ENCODE measurements at regions of chr17 and their contacts with region 1.

Region 1: GRCh38 chr17:7825206-7825990 is 8.6 kb upstream of the KDM6B start:
- DNase-seq: peak; percentile 69
- H3K4me3 ChIP-seq: no peak overlapping the region
- H3K27ac ChIP-seq: no peak overlapping the region
- H3K4me1 ChIP-seq: peaks cover 0 to 12% of the 10 kb centered on the region in 2 experiments; a peak in 1 of 4 replicates
- H3K27me3 ChIP-seq: peaks cover 2% of the 10 kb centered on the region
- CTCF ChIP-seq: peak; percentile 40
- EP300 ChIP-seq: no peak
- RAD21 ChIP-seq: peak; percentile 28; the same call in 1 of the 2 replicates

Region 2: DNA sequence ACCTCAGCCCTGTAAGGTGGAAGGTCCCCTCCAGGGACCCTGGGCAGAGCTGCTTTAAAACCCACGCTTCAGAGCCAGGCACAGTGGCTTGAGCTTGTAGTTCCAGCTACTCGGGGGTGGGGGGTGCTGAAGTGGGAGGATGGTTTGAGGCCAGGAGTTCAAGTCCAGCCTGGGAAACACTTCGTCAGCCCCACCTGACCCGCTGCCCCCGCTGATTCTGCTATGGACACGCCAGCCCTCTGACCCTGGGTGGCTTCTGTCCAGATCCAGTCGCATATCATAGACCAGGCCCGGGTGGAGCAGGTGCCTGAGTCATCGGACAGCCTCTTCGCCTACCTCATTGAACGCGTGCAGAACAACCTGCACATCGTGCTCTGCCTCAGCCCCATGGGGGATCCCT is 26.6 kb before region 1 on chr17:
- CTCF ChIA-PET with region 1: no interaction called
- POLR2A ChIA-PET with region 1: no interaction called
- DNase-seq: no peak
- H3K4me3 ChIP-seq: no peak overlapping the region
- H3K27ac ChIP-seq: no peak overlapping the region
- H3K4me1 ChIP-seq: no peaks in the 10 kb centered on the region
- H3K27me3 ChIP-seq: no peaks in the 10 kb centered on the region
- CTCF ChIP-seq: no peak
- EP300 ChIP-seq: no peak
- RAD21 ChIP-seq: no peak

Region 3: GRCh38 chr17:7844292-7845154 is 19.1 kb after region 1 on chr17:
- CTCF ChIA-PET with region 1: interaction called, 44 read pairs
- POLR2A ChIA-PET with region 1: interaction called, 3 read pairs
- DNase-seq: peak; percentile 93
- H3K4me3 ChIP-seq: peak overlapping the region; percentile 66 to 67
- H3K27ac ChIP-seq: peak overlapping the region; percentile 86 to 100
- H3K4me1 ChIP-seq: peaks cover 26 to 32% of the 10 kb centered on the region in 2 experiments
- H3K27me3 ChIP-seq: no peaks in the 10 kb centered on the region
- CTCF ChIP-seq: no peak
- EP300 ChIP-seq: peak in 1 of 2 experiments; percentile 63; a peak in 1 of 4 replicates
- RAD21 ChIP-seq: no peak